ENCODE measurements at regions of chr5 and their contacts with region 1.

Region 1: DNA sequence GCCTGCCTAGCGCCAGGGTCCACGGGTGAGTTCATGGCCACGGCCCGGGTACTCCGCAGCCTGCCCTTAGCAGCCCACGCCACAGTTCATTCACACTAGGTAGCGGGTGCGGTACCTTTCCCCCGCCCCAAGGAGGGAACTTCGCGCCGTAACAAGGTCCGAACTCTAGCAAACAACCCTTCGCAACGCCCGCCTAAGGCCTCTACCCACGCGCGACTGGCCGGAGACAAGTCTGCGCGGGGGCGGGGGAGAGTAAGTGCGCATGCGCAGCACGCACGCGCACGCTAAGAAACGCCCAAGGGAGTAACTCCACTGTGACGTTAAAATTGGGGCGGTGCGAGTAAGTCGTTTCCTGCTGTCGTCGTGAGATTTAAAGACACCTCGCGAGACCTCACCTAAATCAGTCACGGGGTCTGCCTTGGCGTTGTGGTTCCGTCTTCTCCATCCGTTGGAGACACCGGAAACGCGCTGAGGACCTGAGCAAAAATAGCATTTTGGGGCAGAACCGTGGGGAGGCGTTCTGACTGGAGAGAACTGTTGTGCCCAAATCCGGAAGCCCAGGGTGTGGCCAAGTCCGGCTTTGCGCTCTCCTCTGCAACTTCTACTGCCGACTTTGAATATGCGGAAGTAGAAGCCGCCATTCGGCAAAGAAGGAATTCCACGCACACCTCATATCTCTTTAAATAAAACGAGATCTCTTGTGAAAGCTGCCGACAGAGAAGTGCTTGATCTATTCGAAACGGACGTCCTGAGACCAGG is at the start of gene RAPGEF6:
- DNase-seq: peak; percentile 100
- H3K4me3 Mint-ChIP-seq: peak within 1 kb of the TSS; percentile 94
- H3K27ac Mint-ChIP-seq: peak within 1 kb of the TSS; percentile 98
- H3K4me1 Mint-ChIP-seq: peaks cover 26% of the 10 kb centered on the region
- H3K27me3 Mint-ChIP-seq: no peaks in the 10 kb centered on the region
- total RNA-seq, gene RAPGEF6: 34.5 to 37.3 TPM

Region 2: DNA sequence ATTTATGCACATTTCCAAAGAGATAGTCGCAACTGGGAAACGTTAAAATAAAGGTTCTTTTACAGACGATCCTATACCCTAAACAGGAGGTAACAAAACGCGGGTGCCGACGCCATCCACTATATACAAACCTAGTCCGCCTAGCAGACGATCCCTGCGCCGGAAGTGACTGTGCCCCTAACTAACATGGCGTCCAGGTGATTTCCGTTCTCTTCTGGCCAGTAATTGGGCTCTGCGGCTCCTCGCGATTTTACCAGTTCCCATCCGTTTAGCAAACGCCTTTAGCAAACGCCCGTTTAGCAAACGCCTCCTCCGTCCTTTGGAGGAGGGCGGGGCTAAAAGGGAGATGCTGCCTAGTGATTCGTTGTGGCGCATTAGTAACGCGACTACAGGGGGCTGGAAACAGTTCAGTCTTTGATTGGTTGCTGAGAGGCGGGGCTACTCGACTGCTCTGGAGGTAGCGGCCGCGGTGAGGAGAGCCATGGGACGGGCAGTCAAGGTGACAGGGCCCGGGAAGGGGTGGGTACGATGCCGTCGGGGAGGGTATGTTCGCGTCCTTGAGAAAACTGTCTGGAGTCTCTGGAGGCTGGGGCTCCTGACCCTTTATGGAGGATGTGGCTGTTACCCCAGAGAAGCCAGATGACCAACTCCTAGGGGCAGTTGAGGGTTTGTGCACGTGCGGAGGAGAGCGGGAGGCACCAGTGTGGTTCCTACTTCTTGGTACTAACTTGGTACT is 464.5 kb before region 1 on chr5 and contains the start of gene LYRM7:
- CTCF ChIA-PET with region 1: no interaction called
- intact Hi-C with region 1: loop called (anchors 1 kb)
- DNase-seq: peak; percentile 98
- H3K4me3 Mint-ChIP-seq: peak within 1 kb of the TSS; percentile 99
- H3K27ac Mint-ChIP-seq: peak within 1 kb of the TSS; percentile 92
- H3K4me1 Mint-ChIP-seq: peaks cover 44% of the 10 kb centered on the region
- H3K27me3 Mint-ChIP-seq: no peaks in the 10 kb centered on the region
- total RNA-seq, gene LYRM7: 14.6 to 15.0 TPM

Region 3: DNA sequence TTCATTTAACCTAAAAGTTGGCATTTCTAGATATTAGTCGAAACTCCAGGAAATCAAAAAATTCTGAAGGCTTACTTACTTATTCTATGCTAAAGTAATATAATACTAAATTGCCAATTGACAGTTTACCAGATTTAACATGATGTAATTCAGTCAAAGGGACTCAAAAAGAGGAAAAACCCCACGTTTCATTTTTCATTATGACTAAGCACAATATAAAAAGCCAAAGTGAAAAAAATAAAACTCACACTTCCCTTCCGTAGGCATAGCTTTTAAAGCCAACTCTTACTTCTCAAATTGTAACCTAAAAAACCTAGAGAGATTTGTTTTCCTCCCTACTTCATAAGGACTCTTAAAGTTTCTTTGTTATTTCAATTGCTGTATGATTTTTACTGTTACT is 146.7 kb before region 1 on chr5:
- CTCF ChIA-PET with region 1: no interaction called
- intact Hi-C with region 1: loop called (anchors 2 kb)
- DNase-seq: no peak
- H3K4me3 Mint-ChIP-seq: no peak overlapping the region
- H3K27ac Mint-ChIP-seq: peak overlapping the region; percentile 65
- H3K4me1 Mint-ChIP-seq: peaks cover 49% of the 10 kb centered on the region
- H3K27me3 Mint-ChIP-seq: no peaks in the 10 kb centered on the region

Region 4: GRCh38 chr5:131607903-131608540 is 27.2 kb before region 1 on chr5:
- CTCF ChIA-PET with region 1: no interaction called
- intact Hi-C with region 1: loop called (anchors 1 kb)
- DNase-seq: no peak
- H3K4me3 Mint-ChIP-seq: no peak overlapping the region
- H3K27ac Mint-ChIP-seq: no peak overlapping the region
- H3K4me1 Mint-ChIP-seq: peaks cover 59% of the 10 kb centered on the region
- H3K27me3 Mint-ChIP-seq: no peaks in the 10 kb centered on the region

Region 5: GRCh38 chr5:131854134-131854533 is 219.0 kb after region 1 on chr5:
- CTCF ChIA-PET with region 1: no interaction called
- intact Hi-C with region 1: loop called (anchors 1 kb)
- DNase-seq: peak; percentile 37
- H3K4me3 Mint-ChIP-seq: no peak overlapping the region
- H3K27ac Mint-ChIP-seq: no peak overlapping the region
- H3K4me1 Mint-ChIP-seq: peaks cover 10% of the 10 kb centered on the region
- H3K27me3 Mint-ChIP-seq: no peaks in the 10 kb centered on the region

Region 6: GRCh38 chr5:132293066-132293991 is 658.2 kb after region 1 on chr5:
- CTCF ChIA-PET with region 1: no interaction called
- intact Hi-C with region 1: loop called (anchors 1 kb)
- DNase-seq: peak; percentile 92
- H3K4me3 Mint-ChIP-seq: peak overlapping the region; percentile 92
- H3K27ac Mint-ChIP-seq: peak overlapping the region; percentile 89
- H3K4me1 Mint-ChIP-seq: peaks cover 23% of the 10 kb centered on the region
- H3K27me3 Mint-ChIP-seq: peaks cover 14% of the 10 kb centered on the region

Region 7: DNA sequence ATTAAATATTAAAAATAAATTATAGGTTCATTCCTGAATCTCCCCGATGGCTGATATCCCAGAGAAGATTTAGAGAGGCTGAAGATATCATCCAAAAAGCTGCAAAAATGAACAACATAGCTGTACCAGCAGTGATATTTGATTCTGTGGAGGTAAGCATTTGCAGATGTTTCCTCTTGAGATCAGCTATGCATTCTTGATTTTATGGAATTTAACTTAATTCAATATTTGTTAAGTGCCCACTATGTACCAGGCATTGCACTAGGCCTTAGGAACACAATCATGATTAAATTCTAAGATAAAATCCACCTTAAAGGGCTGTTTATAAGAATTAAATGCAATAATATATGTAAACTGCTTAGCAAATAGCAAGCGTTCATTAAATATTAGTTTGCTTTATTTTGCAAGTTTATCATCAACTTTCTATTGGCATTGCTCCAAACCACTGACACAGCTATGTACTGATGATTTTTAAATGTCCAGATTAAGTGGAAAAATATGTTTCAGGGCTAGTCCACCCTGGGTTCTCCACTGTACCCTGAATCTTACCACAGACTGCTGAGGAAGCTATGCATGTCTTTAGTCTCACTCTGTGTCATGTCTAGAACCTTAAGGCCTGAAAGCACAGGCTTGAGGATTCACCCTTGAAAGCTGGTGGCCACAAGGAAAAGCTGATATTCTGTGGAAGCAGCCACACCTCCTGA is 692.2 kb after region 1 on chr5:
- CTCF ChIA-PET with region 1: no interaction called
- intact Hi-C with region 1: no loop called
- DNase-seq: no peak
- H3K4me3 Mint-ChIP-seq: no peak overlapping the region
- H3K27ac Mint-ChIP-seq: no peak overlapping the region
- H3K4me1 Mint-ChIP-seq: no peaks in the 10 kb centered on the region
- H3K27me3 Mint-ChIP-seq: no peaks in the 10 kb centered on the region

Measured in activated naive CD4-positive, alpha-beta T cell treated with anti-CD3 and anti-CD28 coated beads for 36 hours (primary cell).